HAP-1 (cell line): ENCODE measurements at regions of chr2 and their contacts with region 1.

Region 1: GRCh38 chr2:174771631-174772471 is 7.6 kb upstream of the CHRNA1 start:
- DNase-seq: peak; percentile 86 to 94
- H3K4me3 ChIP-seq: peak overlapping the region; percentile 4; the same call in 1 of the 2 replicates
- H3K4me1 ChIP-seq: peaks cover 31% of the 10 kb centered on the region
- H3K27me3 ChIP-seq: no peaks in the 10 kb centered on the region

Region 2: DNA sequence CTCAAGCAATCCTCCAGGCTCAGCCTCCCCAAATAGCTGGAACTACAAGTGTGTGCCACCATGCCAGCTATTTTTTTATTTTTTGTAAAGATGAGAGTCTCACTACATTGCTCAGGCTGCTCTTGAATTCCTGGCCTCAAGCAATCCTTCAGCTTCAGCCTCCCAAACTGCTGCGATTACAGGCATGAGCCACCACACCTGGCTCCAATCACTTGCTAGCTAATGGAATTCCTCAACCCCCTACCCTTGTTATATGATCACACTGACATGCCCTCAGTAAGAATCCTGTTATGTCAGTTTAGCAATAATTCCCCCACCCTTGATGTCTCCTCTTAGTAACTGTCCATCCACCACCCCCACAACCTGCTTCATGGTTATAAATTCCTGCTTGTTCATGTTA is 221.0 kb after region 1 on chr2:
- in situ Hi-C with region 1: loop called (anchors 5 kb)
- DNase-seq: no peak
- H3K4me3 ChIP-seq: no peak overlapping the region
- H3K4me1 ChIP-seq: peaks cover 6% of the 10 kb centered on the region
- H3K27me3 ChIP-seq: no peaks in the 10 kb centered on the region